Cardiac septum (tissue), 1 donor: ENCODE measurements at regions of chr2 and their contacts with region 1.

Region 1: GRCh38 chr2:158179660-158180059 is 78.0 kb downstream of the UPP2 start:
- DNase-seq: no peak

Region 2: DNA sequence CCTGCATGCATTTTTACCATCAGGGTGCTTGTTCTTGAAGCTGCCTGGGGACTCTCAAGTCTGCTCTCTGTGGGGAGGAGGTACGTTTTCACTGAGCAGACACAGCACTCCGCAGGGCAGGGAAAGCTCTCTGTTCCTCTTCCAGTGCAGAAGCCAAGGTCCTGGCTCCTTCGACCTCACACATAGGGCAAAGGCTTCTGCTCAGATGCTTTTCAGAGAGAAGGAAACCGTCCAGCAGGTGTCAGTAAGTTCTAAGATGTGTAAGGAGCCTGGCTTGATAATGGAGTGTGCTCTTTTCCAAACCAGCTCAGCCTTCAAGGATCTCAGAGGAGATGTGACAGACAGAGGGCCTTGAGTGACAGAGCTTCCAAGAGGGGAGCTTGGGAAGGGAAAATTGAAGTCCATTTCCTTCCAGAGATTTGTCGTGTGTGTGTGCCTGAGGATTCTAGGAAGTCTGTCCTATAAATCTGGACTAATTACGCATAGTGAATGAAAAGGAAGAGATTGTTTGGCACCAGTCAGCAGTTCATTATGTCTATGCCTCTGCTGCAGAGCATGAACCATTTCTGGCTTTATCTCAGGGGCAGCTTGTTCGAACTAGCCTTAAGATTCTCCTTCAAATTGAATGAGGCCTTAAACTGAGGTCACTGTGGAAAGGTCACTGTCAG is 145.3 kb before region 1 on chr2:
- intact Hi-C with region 1: loop called (anchors 5 kb)
- DNase-seq: no peak

Region 3: GRCh38 chr2:158232476-158232875 is 52.8 kb after region 1 on chr2:
- intact Hi-C with region 1: no loop called
- DNase-seq: no peak

Region 4: GRCh38 chr2:158432117-158432516 is 252.5 kb after region 1 on chr2:
- intact Hi-C with region 1: no loop called
- DNase-seq: no peak

Region 5: DNA sequence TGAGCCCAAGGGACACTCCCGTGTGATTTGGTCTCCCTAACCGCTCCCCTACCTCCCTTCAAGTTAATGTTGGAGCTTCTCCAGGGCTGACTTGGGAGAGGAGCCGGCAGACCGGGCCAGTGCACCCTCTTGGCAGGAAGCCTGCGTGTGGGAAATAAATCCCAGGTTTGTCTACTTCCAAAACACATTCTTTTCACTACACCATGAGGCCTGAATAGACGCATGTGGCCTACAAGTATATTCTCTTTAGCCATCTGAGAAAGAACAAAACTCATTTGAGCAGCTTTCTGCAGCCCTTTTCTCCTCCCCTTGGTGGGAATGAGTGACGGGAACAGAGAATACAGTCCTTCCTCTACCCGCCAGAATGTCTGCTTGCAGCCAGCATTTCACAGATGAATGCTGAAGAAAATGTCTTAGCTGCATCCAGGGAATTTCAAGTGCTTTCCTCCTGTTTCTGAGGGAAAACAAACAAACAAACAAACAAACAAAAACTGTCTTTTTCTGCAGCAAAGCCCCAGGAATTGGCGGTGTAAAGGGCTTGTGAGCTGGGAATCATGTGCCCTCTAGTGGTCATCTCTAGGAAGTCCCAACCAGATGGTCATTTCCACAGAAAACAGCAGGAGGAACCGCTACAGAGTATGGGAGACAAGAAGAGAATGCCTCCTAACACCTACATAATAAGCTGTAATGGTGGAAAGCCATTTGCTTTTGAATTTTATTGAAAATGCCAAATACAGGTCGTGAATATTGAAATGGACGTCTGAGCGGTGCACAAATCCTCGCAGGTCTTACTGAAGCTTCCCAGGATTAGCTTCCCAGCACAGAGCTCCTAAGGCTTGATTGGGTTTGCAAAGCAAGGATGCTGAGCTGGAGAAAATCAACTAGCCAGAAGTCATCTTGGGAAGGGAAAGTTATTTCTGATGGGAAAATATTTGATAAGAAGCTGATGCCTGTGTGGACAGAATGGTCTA is 574.3 kb after region 1 on chr2:
- intact Hi-C with region 1: loop called (anchors 2 kb)
- DNase-seq: no peak